ENCODE measurements at regions of chr2 and their contacts with region 1.

Region 1: DNA sequence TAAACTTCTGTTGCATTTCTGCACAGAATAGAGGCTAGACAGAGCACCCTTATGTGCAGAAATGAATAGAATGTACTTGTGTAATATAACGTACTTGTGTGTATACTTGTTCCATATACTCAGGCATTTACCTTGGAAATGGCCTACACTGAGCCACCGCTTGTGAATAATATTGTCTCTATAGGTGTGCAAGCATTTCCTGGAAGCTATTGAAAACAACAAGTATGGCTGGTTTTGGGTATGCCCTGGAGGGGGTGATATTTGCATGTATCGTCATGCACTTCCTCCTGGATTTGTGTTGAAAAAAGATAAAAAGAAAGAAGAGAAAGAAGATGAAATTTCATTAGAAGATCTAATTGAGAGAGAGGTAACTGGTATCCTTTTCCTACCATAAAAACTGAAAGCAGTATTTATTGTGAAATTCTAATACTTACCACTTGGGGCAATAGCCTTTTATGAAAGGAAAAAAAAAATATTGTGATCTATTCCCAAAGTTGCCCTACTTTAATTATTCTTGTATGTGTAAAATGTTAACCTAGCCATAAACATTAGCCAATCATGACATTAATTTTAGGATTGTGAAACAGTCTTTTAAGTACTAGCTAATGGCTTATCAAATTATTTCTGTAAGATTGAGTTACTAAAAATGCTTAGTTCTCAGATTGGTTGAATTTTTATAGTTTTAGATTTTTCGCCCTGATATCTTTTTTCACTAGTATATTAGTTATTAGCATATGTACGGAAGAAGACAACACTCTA is 18.0 kb downstream of the ZC3H15 start:
- DNase-seq: no peak
- ATAC-seq: peak; percentile 61
- H3K4me3 ChIP-seq: no peak overlapping the region
- H3K27ac ChIP-seq: no peak overlapping the region
- H3K4me1 ChIP-seq: no peaks in the 10 kb centered on the region
- H3K27me3 ChIP-seq: no peaks in the 10 kb centered on the region
- CTCF ChIP-seq: peak; percentile 32 to 60 (median 56); a peak in 4 of 6 replicates
- POLR2A ChIP-seq: no peak
- RAD21 ChIP-seq: peak; percentile 67

Region 2: DNA sequence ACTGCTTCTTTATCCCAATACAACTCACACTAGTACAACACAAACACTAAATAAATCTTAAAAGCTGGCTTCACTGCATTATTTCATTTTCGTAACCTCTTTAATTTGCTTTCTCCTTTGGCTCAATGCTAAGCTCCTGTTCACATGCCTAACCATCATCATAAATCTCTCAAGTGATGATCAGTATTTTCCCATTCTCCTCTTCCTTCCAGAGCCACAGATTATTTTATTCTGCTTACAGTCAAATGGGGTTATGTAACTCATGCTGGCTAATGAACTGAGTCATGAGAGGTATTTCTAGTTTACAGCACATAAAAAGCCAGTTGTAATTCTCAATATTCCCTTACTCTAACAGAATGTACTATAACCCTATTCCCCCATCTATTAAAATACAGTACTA is 368.3 kb before region 1 on chr2:
- CTCF ChIA-PET with region 1: no interaction called
- POLR2A ChIA-PET with region 1: no interaction called
- RAD21 ChIA-PET with region 1: no interaction called
- intact Hi-C with region 1: no loop called
- DNase-seq: no peak
- ATAC-seq: no peak
- H3K4me3 ChIP-seq: no peak overlapping the region
- H3K27ac ChIP-seq: no peak overlapping the region
- H3K4me1 ChIP-seq: peaks cover 3% of the 10 kb centered on the region in 2 experiments; a peak in 2 of 4 replicates
- H3K27me3 ChIP-seq: no peaks in the 10 kb centered on the region
- CTCF ChIP-seq: no peak
- POLR2A ChIP-seq: no peak
- RAD21 ChIP-seq: no peak

Region 3: DNA sequence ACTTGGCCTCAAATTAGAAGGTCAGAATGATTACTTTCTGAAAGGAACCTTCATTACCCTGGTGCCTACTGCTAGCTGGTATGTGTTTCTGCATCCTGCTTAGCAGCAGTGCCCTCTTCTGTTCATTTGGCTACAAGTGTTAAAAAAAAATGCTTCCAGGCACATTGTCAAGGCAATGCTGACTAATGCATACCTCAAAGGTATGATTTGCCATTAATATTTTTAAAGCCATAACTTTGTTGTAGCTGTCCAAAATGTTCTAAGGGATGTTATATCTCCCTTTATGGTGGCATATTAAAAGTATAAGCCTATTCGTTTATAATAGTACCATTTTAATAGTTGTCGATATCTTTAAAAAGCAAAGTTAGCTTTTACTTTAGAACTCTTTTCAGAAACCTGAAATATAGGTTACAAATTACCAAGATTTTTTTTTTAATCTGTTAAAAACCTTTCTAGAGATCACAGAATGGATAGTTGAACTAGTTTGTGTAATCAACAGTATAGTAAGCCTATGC is 137.8 kb after region 1 on chr2:
- CTCF ChIA-PET with region 1: interaction called, 33 read pairs
- POLR2A ChIA-PET with region 1: no interaction called
- RAD21 ChIA-PET with region 1: no interaction called
- intact Hi-C with region 1: loop called (anchors 1 kb)
- DNase-seq: peak; percentile 50
- ATAC-seq: peak; percentile 94
- H3K4me3 ChIP-seq: no peak overlapping the region
- H3K27ac ChIP-seq: no peak overlapping the region
- H3K4me1 ChIP-seq: no peaks in the 10 kb centered on the region
- H3K27me3 ChIP-seq: no peaks in the 10 kb centered on the region
- CTCF ChIP-seq: peak; percentile 62 to 83 (median 76); a peak in 5 of 6 replicates
- POLR2A ChIP-seq: no peak
- RAD21 ChIP-seq: peak; percentile 91

Measured in HCT116 (cell line).